Left cardiac atrium (tissue), 4 donors: ENCODE measurements at regions of chr2 and their contacts with region 1.

Region 1: GRCh38 chr2:191501561-191502168 is 176.3 kb upstream of the NABP1 start:
- DNase-seq: no peak
- ATAC-seq: peak; percentile 48 to 54

Region 2: DNA sequence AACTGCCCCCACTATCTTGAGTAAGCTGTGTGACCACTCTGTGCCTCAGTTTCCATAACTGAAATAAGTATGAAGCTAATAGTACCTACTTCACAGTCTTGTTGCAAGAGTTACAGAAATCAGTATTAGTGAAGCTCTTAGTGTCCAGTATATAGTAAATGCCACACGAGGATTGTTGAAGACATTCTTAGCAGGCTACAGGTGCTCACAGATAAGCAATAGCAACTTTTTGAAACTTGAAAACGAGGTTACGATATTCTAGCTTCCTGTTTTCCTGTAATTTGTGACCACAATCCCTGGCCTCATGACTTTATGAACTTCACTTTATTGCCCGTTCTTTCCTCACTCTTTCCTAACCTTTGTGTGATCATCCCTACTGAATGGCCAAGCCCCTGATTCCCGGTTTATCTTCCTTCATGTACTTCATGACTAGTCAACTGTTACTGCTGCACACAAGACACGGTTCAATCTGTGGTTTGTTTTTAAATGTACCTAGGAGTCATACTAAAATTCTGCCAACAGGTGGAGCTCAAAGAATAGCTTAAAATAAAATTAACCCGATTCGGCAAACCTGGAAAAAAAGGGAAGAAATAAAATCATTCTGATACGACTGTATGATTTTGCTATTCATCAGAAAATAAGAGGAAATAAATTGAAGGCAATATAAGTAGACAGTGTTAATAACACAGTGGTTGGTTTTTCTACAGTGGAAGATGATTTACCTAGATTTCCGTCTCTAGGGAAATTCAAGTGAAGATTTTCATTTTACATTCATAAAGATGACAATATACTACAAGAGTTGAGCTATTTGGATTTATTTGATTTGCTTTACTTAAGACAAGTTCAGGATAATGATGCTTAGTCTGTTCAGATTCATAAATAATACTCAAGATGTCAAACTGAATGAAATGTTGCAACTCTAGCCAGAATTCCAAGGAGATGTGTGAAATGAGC is 449.6 kb before region 1 on chr2:
- intact Hi-C with region 1: loop called in 1 of 2 experiments (anchors 10 kb)
- DNase-seq: no peak
- ATAC-seq: peak in 1 of 2 donors; percentile 22

Region 3: DNA sequence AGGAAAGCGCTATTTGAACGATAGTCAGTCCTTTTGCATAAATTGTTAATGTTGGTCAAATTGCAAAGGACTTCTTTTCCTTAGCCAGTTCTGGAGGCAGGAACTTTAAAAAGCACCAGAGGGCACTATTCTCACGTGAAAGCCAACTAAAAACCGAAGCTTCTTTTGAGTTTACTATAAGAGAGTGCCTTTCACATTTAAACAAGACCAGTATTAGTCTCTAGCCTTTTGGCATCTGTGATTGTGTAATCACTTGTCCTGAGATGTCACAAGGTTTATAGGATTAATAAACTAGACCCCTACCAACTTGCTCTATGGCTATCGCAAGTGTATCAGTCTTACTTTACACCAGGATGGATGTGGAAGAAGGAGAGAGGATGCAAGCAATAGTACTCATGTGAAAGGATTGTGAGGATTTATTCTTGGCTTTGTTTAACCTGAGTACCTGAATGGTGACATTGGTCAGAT is 336.5 kb before region 1 on chr2:
- intact Hi-C with region 1: loop called (anchors 2 to 5 kb)
- DNase-seq: no peak
- ATAC-seq: peak; percentile 78 to 84

Region 4: GRCh38 chr2:191218292-191218898 is 283.3 kb before region 1 on chr2:
- intact Hi-C with region 1: loop called in 1 of 2 experiments (anchors 5 kb)
- DNase-seq: peak; percentile 42
- ATAC-seq: peak; percentile 39 to 69

Region 5: GRCh38 chr2:191231995-191232394 is 269.7 kb before region 1 on chr2:
- intact Hi-C with region 1: loop called in 1 of 2 experiments (anchors 10 kb)
- DNase-seq: no peak
- ATAC-seq: peak in 1 of 2 donors; percentile 8